OCI-LY7 (cell line): ENCODE measurements at regions of chr3 and their contacts with region 1.

Region 1: DNA sequence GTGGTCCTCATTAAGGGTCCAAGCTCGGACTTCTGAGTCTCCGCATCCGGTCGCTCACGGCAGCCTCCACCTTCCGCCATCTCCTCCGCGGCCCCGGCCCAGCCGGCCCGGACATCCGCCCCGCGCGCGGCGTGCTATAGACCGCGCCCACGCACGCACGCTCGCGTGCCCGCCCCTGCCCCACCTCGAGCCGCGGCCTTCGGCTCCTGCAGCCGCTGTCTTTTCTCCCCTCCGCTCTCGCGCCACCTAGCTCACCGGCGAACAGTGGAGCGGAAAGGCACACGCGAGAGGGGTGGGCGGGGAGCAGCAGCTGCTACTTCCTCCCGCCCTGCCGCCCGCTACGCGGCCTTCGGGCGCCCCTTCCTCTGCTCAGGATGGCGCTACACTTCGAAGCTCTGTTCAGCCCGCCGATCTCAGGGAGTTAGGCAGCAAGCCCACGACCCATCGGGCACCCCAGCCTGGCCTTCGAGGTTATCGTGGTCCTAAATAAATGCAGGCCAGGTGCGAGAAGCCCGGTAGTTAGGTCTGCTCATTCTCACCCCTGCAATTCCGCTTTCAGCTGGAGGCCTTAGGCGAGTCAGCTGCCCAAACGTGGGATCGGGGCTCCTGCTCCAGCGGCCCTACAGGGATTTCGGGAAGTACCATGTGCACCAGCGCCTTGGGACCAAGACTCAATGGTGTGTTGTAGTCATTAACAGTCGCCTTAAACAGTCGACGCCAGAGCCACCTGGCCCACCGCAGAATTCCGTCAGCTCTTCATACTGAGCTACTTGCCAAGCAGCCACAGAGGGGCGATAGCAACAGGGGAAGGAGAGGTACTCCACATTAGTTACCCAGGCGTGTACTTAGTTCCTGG is at the start of gene USP4:
- DNase-seq: peak; percentile 97
- H3K4me3 ChIP-seq: peak within 1 kb of the TSS; percentile 97
- H3K27ac ChIP-seq: peak within 1 kb of the TSS; percentile 97
- H3K4me1 ChIP-seq: peaks cover 65% of the 10 kb centered on the region
- CTCF ChIP-seq: peak; percentile 84
- total RNA-seq, gene USP4: 28.6 and 41.6 TPM in 2 replicates

Region 2: DNA sequence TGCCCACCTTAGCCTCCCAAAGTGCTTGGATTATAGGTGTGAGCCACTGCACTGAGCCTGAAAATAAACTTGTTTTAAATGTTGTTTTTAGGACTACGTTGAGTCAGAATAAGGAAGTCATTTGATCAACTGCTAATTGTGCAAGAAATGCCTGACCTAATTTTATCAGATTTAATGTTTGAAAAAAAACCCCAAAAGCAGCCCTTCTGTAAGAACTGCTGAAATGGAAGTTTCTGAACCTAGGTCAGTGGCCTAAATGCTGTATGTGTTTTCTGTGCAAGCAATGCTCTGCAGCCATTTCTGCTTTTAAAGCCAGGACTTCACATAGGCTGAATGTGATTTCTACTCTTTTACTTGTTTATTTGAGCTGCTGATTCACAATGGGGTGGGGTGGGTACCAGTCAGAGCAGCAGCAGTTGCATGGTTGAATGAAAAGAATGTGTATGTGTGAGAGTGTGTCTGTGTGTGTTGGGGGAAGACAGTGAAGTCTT is 11.4 kb after region 1 on chr3:
- CTCF ChIA-PET with region 1: no interaction called
- POLR2A ChIA-PET with region 1: interaction called, 10 read pairs
- intact Hi-C with region 1: no loop called
- DNase-seq: no peak
- H3K4me3 ChIP-seq: no peak overlapping the region
- H3K27ac ChIP-seq: peak overlapping the region; percentile 20
- H3K4me1 ChIP-seq: peaks cover 38% of the 10 kb centered on the region
- CTCF ChIP-seq: no peak

Region 3: DNA sequence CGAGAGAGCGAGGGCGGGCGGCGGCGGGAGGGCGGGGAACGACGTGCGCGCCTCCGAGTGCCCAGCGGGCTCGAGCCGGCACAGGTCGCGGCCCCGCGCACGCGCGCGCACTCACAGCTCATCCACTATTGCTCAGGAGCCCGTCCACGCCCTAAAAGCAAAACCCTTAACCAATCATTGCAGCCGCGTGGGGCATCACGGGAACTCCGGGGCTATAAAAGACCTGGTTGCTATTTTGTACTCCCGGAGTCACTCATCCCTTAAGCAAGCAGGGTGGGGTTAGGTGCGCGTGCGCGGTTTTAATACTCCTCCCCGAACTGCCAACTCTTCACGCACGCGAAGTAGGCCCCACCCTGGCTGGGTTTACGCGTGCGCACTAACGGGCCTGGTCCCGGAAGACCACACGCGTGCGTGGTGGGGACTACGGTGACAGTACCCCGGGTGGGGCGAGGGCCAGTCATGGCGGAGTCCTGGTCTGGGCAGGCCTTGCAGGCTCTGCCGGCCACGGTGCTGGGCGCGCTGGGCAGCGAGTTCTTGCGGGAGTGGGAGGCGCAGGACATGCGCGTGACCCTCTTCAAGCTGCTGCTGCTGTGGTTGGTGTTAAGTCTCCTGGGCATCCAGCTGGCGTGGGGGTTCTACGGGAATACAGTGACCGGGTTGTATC is 71.9 kb after region 1 on chr3 and contains the starts of genes RHOA and TCTA:
- CTCF ChIA-PET with region 1: interaction called, 3 read pairs
- POLR2A ChIA-PET with region 1: interaction called, 16 read pairs
- intact Hi-C with region 1: loop called (anchors 1 kb)
- DNase-seq: peak; percentile 100
- H3K4me3 ChIP-seq: peak within 1 kb of the TSS; percentile 91
- H3K27ac ChIP-seq: peak within 1 kb of the TSS; percentile 79
- H3K4me1 ChIP-seq: peaks cover 65% of the 10 kb centered on the region
- CTCF ChIP-seq: no peak
- total RNA-seq, gene RHOA: 218 and 219 TPM in 2 replicates
- total RNA-seq, gene TCTA: 15.8 and 17.9 TPM in 2 replicates

Region 4: GRCh38 chr3:49445381-49445780 is 105.2 kb after region 1 on chr3:
- CTCF ChIA-PET with region 1: interaction called, 3 read pairs
- POLR2A ChIA-PET with region 1: interaction called, 18 read pairs
- intact Hi-C with region 1: loop called (anchors 1 kb)
- DNase-seq: no peak
- H3K4me3 ChIP-seq: no peak overlapping the region
- H3K27ac ChIP-seq: no peak overlapping the region
- H3K4me1 ChIP-seq: peaks cover 31% of the 10 kb centered on the region
- CTCF ChIP-seq: no peak

Region 5: DNA sequence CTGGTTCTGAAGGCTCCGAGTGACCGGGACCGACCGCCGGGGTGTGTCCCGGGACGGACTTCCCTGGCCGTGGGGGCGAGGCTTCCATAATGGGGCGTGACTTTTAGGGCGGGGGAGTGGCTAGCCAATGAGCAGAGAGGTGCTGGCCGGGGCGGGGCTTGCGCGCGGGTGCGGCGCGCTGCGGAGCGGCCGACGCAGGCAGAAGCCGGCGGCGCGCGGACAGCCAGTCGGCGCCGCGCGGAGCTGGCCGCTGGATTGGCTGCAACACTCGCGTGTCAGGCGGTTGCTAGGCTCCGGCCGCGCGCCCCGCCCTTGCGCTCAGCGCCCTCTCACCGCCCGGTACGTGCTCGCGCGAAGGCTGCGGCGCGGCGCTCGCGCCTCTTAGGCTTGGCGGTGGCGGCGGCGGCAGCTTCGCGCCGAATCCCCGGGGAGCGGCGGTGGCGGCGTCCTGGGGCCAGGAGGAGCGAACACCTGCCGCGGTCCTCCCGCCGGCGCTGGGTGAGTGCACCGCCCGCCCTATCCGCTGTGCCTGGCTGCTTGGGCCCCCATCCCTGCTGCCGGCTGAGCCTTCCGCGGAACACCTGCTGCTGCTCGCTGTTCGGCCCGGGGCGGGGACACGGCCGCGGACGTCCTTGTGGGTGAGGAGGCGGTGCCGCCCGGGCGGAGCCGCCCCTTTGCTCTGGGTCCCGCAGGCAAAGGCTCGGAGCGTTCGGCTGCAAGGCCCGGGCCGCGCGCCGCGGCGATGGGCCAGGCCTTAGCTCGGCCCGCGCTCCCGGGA is 130.0 kb after region 1 on chr3 and contains the start of gene DAG1:
- CTCF ChIA-PET with region 1: interaction called, 4 read pairs
- POLR2A ChIA-PET with region 1: interaction called, 3 read pairs
- intact Hi-C with region 1: loop called (anchors 1 kb)
- DNase-seq: peak; percentile 97
- H3K4me3 ChIP-seq: peak within 1 kb of the TSS; percentile 90
- H3K27ac ChIP-seq: peak within 1 kb of the TSS; percentile 80
- H3K4me1 ChIP-seq: peaks cover 22% of the 10 kb centered on the region
- CTCF ChIP-seq: no peak
- total RNA-seq, gene DAG1: 10.6 and 10.9 TPM in 2 replicates